Panc1 (cell line): ENCODE measurements at regions of chr1 and their contacts with region 1.

Region 1: DNA sequence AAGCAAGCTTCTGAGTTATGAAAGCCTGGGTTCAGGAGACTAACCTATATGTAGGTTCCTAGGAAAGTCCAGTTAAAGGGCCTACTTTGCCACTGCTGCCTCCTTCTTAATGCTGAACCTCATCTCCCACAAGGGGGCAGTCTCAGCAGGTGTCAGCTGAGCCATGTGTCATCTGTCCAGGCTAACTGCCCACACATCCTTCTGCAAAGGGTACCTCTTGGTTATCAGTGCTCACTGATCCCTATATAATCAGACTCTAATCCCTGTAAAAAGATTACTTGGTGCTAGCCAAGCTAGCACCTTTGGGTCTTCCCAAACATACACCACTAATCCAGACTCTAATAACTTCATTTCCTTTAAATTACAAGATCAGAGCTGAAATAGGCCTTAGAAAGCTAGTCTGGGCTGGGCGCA is 9.0 kb downstream of the PRDX1 start:
- DNase-seq: peak; percentile 64
- ATAC-seq: peak; percentile 75
- H3K4me3 ChIP-seq: no peak overlapping the region
- H3K27ac ChIP-seq: no peak overlapping the region
- H3K4me1 ChIP-seq: no peaks in the 10 kb centered on the region; the same call in 1 of the 2 replicates
- H3K27me3 ChIP-seq: no peaks in the 10 kb centered on the region
- CTCF ChIP-seq: peak; percentile 84

Region 2: DNA sequence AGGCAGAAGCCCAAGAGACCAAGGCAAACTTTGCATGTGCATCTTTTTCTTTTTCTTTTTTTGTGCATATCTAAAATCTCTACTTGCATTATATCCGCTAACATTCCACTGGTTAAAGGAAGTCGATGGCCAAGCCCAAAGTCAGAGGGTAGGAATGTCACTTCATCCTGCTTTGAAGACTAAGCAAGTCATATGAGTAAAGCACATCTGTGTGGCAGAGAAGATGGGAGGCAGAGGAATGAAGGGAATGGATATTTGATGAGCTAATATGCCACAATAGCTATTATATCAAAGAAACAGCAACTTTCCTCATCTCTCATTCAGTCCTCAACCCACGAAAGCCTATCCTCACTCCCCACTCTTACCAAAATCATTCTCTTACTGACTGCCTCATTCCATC is 1048.3 kb before region 1 on chr1:
- CTCF ChIA-PET with region 1: no interaction called
- POLR2A ChIA-PET with region 1: no interaction called
- in situ Hi-C with region 1: no loop called
- intact Hi-C with region 1: no loop called
- DNase-seq: no peak
- ATAC-seq: no peak
- H3K4me3 ChIP-seq: no peak overlapping the region
- H3K27ac ChIP-seq: no peak overlapping the region
- H3K4me1 ChIP-seq: no peaks in the 10 kb centered on the region
- H3K27me3 ChIP-seq: no peaks in the 10 kb centered on the region
- CTCF ChIP-seq: no peak

Region 3: DNA sequence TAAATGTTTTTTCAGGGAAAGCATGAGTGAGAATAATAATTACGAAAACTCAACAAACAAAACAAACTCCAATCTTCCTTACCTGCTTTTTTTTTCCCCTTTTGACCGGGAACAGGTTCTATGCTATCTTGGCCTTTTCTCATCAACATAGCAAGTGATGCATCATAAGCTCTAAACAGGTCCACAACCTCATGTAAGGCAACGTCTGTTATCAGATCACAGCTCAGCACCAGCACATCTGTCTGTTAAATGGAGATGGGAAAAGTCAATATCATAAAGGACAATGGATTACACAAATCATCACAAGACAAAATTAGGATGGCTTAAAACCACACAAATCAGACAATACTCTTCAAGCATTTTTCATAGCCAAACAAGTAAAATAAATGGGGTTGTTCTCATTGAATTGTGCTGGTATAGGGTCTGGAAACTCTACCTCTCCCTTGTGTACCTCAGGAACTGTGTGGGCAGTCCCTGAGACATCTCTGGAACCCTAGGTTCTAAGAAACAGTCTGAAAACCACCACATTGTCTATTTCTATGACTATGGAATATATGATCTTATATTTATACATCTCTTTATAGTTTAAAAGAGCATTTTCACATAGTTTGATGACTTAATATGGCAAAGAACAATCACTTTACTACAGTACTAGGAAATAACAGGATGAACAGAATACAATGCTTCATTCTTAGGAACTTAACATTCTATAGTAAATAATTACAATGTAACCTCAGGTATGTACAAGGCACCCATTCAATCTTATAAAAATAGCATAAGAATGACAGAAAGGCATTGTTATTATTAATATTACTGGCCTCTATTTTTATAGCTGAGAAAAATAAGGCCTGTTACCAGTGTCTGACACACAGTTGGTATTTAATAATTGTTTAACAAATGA is 571.0 kb before region 1 on chr1:
- CTCF ChIA-PET with region 1: no interaction called
- POLR2A ChIA-PET with region 1: interaction called, 19 read pairs
- in situ Hi-C with region 1: no loop called
- intact Hi-C with region 1: no loop called
- DNase-seq: no peak
- ATAC-seq: no peak
- H3K4me3 ChIP-seq: no peak overlapping the region
- H3K27ac ChIP-seq: no peak overlapping the region
- H3K4me1 ChIP-seq: peaks cover 3% of the 10 kb centered on the region; the same call in 1 of the 2 replicates
- H3K27me3 ChIP-seq: no peaks in the 10 kb centered on the region
- CTCF ChIP-seq: no peak

Region 4: DNA sequence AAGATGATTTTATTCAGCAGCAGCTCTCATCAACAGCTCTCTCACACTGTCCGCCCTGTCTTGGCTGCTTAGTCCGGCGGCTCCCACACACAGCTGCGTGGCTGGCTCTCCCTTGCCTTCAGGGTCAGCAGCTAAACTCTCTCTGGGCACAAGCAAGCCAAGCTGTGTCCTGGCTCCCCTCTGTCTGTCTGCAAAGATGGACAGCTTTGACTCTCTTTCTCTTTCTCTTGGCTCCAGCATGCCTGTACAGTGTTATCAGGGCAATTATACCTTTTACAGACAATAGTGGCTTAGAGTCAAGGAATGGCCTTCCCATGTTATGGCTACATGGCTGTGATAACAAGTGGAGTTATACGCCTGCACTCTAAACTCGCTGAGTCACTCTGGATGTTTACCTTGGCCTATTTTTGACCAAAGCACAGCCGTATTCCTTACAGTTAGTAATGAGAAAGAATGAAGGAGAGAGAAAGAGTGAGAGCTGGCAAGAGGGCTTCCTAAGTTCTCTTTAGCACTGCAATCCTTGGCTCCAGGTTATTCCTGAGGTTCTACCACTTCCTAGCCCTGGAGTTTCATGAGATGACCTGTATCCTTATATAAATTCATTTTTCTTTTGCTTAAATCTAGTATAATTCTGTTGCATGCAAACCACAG is 246.4 kb before region 1 on chr1:
- CTCF ChIA-PET with region 1: no interaction called
- POLR2A ChIA-PET with region 1: no interaction called
- in situ Hi-C with region 1: no loop called
- intact Hi-C with region 1: no loop called
- DNase-seq: no peak
- ATAC-seq: peak; percentile 93
- H3K4me3 ChIP-seq: peak overlapping the region in 1 of 2 experiments; percentile 7; a peak in 1 of 4 replicates
- H3K27ac ChIP-seq: peak overlapping the region; percentile 73
- H3K4me1 ChIP-seq: peaks cover 16% of the 10 kb centered on the region
- H3K27me3 ChIP-seq: no peaks in the 10 kb centered on the region
- CTCF ChIP-seq: no peak

Region 5: GRCh38 chr1:45569962-45570581 is 57.4 kb after region 1 on chr1:
- CTCF ChIA-PET with region 1: interaction called, 5 read pairs
- POLR2A ChIA-PET with region 1: no interaction called
- in situ Hi-C with region 1: no loop called
- intact Hi-C with region 1: loop called (anchors 1 kb)
- DNase-seq: peak; percentile 81
- ATAC-seq: peak; percentile 92
- H3K4me3 ChIP-seq: no peak overlapping the region
- H3K27ac ChIP-seq: no peak overlapping the region
- H3K4me1 ChIP-seq: no peaks in the 10 kb centered on the region
- H3K27me3 ChIP-seq: no peaks in the 10 kb centered on the region
- CTCF ChIP-seq: peak; percentile 97